ENCODE measurements at regions of chr4 and their contacts with region 1.

Region 1: DNA sequence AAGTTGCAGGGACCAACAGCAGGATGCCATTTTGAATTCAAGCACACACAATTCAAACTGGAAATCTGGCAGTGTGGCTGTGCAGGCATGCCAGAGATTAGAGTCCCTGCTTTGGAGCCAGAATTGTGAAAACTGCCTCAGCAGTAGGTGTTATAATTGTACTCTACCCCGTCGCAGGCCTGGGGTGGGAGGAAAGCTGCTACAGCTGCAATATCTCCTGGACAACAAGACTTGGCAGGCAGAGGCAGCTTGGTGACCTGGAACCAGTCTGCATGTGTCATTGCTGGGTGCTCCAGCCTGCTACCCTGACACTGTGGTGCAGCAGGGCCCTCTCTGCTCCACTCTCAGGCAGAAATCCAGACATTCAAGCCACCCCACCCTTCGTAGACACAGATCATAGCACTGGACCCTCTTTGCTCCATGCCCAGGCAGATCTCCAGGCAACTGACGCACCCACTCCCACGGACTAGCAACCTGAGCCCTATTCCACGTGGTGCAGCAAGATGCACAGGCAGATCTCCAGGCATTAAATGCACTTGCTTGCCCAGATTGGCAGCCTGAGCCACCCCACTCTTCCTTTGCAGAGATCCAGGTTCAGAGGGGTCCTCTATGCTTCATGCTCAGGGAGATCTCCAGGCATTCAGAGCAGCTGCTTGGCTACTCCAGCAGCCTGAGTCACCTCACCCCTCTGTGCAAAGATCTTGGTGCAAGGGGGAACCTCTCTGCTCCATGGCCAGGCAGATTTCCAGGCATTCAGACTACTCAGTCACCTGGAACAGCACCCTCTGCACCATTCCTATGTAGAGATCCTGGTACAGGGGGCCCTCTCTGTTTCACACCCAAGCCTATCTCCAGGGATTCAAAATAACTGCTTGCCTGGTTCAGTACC is 140.5 kb downstream of the LRBA start:
- DNase-seq: peak; percentile 5
- H3K4me3 ChIP-seq: no peak overlapping the region
- H3K27ac ChIP-seq: no peak overlapping the region
- H3K4me1 ChIP-seq: no peaks in the 10 kb centered on the region
- H3K27me3 ChIP-seq: no peaks in the 10 kb centered on the region
- CTCF ChIP-seq: no peak

Region 2: DNA sequence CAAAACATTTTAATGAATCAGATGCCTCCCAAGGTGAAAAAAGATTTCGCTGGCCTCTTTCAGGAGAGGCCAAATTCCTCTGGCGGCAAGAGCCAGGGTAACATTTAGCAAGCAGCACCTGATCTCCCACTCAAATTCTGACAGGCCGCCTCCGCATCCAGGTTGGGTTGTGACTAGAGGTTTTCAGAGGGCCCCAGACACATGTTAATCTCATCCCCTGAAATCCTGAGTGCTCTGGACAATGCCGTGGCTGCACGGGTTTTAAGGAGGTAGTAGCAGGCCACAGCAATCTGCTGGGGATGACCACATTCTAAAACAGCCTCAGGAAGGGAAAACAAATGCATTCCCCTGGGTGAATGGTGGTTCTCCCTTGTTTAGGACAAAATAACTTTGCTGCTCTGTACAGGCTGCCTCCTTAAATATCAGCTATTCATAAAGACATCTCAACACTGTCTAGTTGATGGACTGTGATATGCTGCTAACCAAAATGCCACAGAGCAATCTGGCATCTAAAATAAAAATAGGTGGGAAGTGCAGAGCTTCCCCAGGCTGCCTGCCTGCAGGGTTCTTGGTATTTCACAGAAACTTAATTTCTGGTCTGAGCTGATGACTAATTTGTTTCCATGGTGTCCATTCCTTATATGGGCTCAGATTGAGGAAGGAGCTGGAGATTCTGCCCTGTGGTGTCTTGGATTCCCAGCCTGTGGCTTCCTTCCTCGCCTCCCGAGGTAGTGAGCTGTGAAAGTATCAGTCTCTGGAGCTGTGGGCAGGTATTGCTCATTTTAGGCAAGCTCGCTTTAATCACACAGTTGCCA is 594.3 kb before region 1 on chr4:
- CTCF ChIA-PET with region 1: no interaction called
- dilution Hi-C with region 1: no loop called
- in situ Hi-C with region 1: loop called (anchors 10 kb)
- intact Hi-C with region 1: no loop called
- DNase-seq: peak; percentile 96
- H3K4me3 ChIP-seq: peak overlapping the region in 1 of 3 experiments; percentile 3
- H3K27ac ChIP-seq: peak overlapping the region; percentile 39
- H3K4me1 ChIP-seq: peaks cover 25% of the 10 kb centered on the region
- H3K27me3 ChIP-seq: no peaks in the 10 kb centered on the region
- CTCF ChIP-seq: no peak